Posterior vena cava (tissue), 2 donors: ENCODE measurements at regions of chr1 and their contacts with region 1.

Region 1: GRCh38 chr1:57424231-57425027 is 569 bp upstream of the DAB1 start:
- DNase-seq: peak; percentile 78

Region 2: GRCh38 chr1:56831871-56832693 is 592.3 kb before region 1 on chr1:
- intact Hi-C with region 1: loop called in 1 of 2 experiments (anchors 10 kb)
- DNase-seq: peak; percentile 84

Region 3: DNA sequence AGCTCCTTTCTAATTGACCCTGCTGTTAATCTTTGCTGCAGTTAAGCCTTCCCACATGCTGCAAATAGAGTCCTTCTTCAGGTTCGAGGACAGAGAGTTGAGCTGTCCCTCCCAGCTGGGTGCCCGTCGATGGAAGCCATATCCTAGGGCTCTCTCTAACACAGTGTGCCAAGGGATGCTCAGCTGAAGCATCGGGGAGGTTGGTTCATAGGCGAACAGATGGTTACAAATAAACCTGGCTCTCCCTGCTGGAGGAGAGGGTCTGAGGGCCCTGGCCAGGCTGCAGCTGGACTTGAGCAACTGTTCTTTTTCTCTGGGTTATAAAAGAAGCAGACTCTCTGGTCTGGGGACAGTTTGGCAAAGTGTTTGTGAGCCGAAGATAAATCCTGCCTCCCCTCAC is 338.3 kb before region 1 on chr1:
- intact Hi-C with region 1: no loop called
- DNase-seq: no peak

Region 4: GRCh38 chr1:57270927-57271698 is 153.3 kb before region 1 on chr1:
- intact Hi-C with region 1: no loop called
- DNase-seq: no peak

Region 5: DNA sequence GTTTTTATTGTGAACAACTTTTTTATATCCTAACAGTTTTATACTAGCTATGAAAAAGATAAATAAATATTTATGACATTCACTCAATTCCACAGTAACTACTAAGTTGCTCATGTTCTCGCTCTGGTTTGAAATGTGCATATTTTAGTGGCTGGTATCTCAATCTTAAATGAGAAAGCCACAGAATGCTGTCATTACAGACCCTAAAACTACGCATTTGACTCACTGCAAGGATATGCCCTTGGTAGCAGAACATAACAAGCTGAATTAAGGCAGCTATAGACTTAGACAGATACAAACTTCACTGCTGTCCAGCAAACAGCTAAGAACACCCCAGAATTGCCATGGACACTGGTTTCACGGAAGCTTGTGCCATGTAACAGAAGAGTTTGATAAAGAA is 19.5 kb before region 1 on chr1:
- intact Hi-C with region 1: no loop called
- DNase-seq: no peak

Region 6: GRCh38 chr1:58047265-58047858 is 622.9 kb after region 1 on chr1:
- intact Hi-C with region 1: loop called in 1 of 2 experiments (anchors 5 kb)
- DNase-seq: no peak

Region 7: DNA sequence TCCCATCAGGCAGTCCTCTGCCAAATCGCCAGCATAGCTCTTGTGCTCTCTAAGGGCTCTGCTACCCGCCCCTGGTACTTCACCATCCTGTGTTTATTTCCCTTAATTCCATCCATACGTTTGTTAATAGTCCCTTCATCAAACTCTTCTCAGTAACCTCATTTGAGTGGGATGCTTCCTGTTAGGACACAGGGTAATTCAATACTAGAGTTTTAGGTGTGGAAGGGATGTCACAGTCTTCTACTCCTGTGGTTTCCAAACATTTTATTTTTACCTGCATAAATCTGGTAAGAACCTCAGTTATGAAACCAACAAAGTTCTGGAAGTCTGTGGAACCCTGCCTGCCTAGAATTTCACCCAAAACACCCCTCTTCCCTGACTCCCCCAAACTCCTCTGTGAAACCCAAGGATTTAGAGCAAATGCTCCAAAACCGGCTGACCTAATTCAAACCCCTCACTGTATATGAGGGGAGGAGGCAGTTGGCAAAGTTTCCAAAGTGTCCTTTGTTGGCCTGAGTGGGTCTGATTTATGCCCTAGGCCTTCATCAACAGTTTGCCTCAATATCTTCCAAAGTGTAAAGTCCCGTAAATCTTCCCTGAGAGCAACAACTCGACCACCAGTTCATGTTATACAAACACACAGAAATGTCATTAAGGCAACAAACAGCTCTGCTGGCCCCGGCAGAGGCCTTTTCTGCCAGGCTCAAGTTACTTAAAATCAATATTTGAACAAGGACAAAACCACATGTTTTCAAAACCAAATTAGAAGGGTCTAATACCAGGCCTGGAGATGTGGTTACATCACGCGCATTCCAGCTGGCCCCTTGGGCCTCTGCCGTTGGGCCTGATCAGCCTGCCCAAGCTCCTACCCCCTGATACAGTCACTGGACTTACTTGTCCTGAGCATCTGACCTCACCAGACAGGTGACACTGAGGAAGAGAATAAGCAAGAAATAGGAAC is 1790.1 kb after region 1 on chr1:
- intact Hi-C with region 1: no loop called
- DNase-seq: no peak